Naive thymus-derived CD4-positive, alpha-beta T cell (primary cell): ENCODE measurements at regions of chr16 and their contacts with region 1.

Region 1: DNA sequence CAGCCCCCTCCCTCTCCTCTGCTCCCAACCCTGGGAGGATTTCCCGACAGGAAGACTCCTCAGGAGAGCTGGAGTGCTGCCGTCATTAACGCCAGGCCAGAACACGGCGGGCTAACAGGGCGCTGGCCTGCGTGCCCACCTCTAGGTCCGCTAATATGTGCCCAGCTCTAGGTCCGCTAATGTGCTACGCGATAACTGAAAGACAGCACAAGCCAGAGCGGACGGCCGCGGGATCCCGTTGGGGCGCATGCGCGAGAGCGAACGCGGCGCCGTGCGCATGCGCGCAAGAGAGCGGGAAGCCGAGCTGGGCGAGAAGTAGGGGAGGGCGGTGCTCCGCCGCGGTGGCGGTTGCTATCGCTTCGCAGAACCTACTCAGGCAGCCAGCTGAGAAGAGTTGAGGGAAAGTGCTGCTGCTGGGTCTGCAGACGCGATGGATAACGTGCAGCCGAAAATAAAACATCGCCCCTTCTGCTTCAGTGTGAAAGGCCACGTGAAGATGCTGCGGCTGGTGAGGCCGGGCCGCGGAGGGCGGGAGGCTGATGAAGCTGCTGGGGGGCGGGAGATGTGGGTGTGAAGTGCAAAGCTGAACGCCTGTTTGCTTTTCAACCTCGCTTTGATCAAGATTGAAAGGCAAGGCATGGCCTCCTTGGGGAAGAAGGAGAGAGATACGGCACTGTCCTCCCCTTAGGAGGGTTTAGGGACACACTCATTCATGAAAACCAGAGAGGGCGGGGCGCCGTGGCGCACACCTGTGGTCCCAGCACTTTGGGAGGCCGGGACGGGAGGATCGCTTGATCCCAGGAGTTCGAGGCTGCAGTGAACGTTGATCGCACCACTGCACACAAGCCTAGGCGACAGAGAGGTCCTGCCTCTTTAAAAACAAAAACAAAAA is at the start of gene CKLF:
- DNase-seq: peak; percentile 84 to 96 (median 92)
- ATAC-seq: peak; percentile 83
- H3K4me3 ChIP-seq: peak within 1 kb of the TSS; percentile 94
- H3K4me3 Mint-ChIP-seq: peak within 1 kb of the TSS; percentile 92 to 99 (median 95)
- H3K27ac ChIP-seq: peak within 1 kb of the TSS; percentile 77
- H3K27ac Mint-ChIP-seq: peak within 1 kb of the TSS; percentile 91 to 97 (median 94)
- H3K4me1 ChIP-seq: peaks cover 49 to 68% of the 10 kb centered on the region in 2 donors
- H3K4me1 Mint-ChIP-seq: peaks cover 59 to 85% (median 80%) of the 10 kb centered on the region in 7 donors
- H3K27me3 ChIP-seq: no peaks in the 10 kb centered on the region
- H3K27me3 Mint-ChIP-seq: peaks cover 0 to 2% (median 0%) of the 10 kb centered on the region in 5 donors
- total RNA-seq, gene CKLF: 24.1 to 160 (median 42.9) TPM

Region 2: DNA sequence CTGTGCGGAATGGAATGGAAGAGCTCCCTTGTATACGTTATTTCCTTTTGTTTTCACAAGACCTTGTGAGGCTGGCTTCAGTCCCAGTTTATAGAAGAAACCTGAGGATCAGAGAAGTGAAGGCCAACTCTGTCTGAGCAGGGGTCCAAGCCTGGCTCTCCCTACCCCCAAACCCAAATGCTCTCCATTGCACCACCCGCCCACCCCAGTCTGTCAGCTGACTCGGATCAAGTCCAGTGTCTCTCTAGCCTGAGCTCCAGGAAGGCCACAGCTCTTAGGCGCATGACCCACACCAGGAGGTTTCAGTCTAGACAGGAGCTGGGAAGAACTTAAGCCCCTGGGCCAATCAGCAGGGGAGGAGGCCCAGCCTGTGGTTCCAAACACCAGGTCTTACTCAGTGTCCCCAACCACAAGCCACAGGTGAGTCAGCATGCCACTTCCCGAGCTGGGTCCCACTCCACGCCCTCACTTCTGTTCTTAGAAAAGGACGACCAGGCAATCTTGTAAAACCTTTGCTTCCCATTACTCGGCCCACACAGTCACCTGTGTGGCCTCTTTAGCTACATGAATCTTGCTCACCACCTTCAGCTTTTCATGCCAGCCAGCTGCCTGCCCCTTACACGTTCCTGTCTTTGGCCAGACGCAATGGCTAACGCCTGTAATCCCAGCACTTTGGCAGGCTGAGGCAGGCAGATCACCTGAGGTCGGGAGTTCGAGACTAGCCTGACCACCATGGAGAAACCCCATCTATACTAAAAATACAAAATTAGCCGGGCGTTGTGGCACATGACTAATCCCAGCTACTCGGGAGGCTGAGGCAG is 30.4 kb before region 1 on chr16:
- CTCF ChIA-PET with region 1: interaction called, 24 read pairs
- POLR2A ChIA-PET with region 1: interaction called, 164 read pairs
- intact Hi-C with region 1: loop called (anchors 1 kb)
- DNase-seq: peak in 8 of 9 donors; percentile 26 to 92 (median 42)
- ATAC-seq: peak; percentile 65
- H3K4me3 ChIP-seq: peak overlapping the region; percentile 39
- H3K4me3 Mint-ChIP-seq: peak overlapping the region; percentile 71 to 85 (median 80)
- H3K27ac ChIP-seq: no peak overlapping the region
- H3K27ac Mint-ChIP-seq: peak overlapping the region; percentile 79 to 96 (median 91)
- H3K4me1 ChIP-seq: peaks cover 73 to 74% of the 10 kb centered on the region in 2 donors
- H3K4me1 Mint-ChIP-seq: peaks cover 69 to 97% (median 85%) of the 10 kb centered on the region in 7 donors
- H3K27me3 ChIP-seq: no peaks in the 10 kb centered on the region
- H3K27me3 Mint-ChIP-seq: peaks cover 0 to 4% (median 0%) of the 10 kb centered on the region in 5 donors

Region 3: GRCh38 chr16:66650707-66651473 is 98.4 kb after region 1 on chr16:
- CTCF ChIA-PET with region 1: no interaction called
- POLR2A ChIA-PET with region 1: interaction called, 3 read pairs
- intact Hi-C with region 1: loop called in 1 of 2 experiments (anchors 5 kb)
- DNase-seq: peak; percentile 57 to 87 (median 81)
- ATAC-seq: peak; percentile 99
- H3K4me3 ChIP-seq: peak overlapping the region; percentile 44
- H3K4me3 Mint-ChIP-seq: peak overlapping the region; percentile 50 to 86 (median 76)
- H3K27ac ChIP-seq: no peak overlapping the region
- H3K27ac Mint-ChIP-seq: peak overlapping the region in 6 of 9 donors; percentile 41 to 71 (median 62)
- H3K4me1 ChIP-seq: peaks cover 0 to 5% of the 10 kb centered on the region in 2 donors
- H3K4me1 Mint-ChIP-seq: peaks cover 0 to 15% (median 9%) of the 10 kb centered on the region in 7 donors
- H3K27me3 ChIP-seq: no peaks in the 10 kb centered on the region
- H3K27me3 Mint-ChIP-seq: peaks cover 2 to 11% (median 6%) of the 10 kb centered on the region in 5 donors

Region 4: DNA sequence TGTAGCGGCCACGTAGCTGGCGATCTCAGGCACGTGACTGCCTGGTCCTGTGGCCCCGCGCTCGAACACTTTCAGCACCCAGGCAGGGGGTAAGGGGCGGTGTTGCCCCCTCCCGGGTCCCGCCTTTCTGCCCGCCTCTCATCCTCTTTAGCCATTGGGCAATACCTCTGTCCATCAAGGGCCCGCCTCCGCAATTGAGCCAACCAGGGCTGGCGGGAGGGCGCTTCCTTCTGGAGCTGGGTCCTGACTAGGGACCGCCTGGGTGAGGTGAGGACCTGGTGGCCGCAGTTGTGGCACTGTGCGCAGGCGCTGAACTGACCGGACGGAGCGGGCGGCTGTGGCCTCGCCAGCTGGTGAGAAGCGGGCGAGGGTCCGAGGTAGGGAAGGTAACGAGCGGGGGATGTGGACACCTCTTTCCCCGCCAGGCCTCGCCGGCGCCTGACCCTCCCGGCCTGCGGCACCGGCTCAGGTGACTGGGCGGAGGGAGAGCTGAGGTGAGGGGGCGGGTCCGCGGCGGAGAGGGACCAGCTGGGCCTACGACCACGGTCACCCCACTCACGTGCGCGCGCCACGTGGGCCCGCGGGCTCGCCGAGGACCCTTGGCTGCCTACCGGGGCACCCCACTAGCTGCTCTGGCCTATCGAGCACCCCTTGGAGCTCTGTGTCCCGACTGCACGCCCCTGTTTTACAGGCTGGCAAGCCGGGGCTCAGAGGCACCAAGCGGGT is 327.9 kb after region 1 on chr16 and contains the start of gene PDP2:
- CTCF ChIA-PET with region 1: no interaction called
- POLR2A ChIA-PET with region 1: no interaction called
- intact Hi-C with region 1: loop called in 1 of 2 experiments (anchors 5 kb)
- DNase-seq: peak; percentile 73 to 92 (median 90)
- ATAC-seq: peak; percentile 99
- H3K4me3 ChIP-seq: peak within 1 kb of the TSS; percentile 86
- H3K4me3 Mint-ChIP-seq: peak within 1 kb of the TSS; percentile 92 to 100 (median 99)
- H3K27ac ChIP-seq: peak within 1 kb of the TSS; percentile 67
- H3K27ac Mint-ChIP-seq: peak within 1 kb of the TSS; percentile 89 to 98 (median 92)
- H3K4me1 ChIP-seq: peaks cover 4 to 12% of the 10 kb centered on the region in 2 donors
- H3K4me1 Mint-ChIP-seq: peaks cover 16 to 51% (median 31%) of the 10 kb centered on the region in 7 donors
- H3K27me3 ChIP-seq: no peaks in the 10 kb centered on the region
- H3K27me3 Mint-ChIP-seq: no peaks in the 10 kb centered on the region
- total RNA-seq, gene PDP2: 4.5 to 24.0 (median 15.9) TPM